MCF 10A (cell line): ENCODE measurements at regions of chr12 and their contacts with region 1.

Region 1: DNA sequence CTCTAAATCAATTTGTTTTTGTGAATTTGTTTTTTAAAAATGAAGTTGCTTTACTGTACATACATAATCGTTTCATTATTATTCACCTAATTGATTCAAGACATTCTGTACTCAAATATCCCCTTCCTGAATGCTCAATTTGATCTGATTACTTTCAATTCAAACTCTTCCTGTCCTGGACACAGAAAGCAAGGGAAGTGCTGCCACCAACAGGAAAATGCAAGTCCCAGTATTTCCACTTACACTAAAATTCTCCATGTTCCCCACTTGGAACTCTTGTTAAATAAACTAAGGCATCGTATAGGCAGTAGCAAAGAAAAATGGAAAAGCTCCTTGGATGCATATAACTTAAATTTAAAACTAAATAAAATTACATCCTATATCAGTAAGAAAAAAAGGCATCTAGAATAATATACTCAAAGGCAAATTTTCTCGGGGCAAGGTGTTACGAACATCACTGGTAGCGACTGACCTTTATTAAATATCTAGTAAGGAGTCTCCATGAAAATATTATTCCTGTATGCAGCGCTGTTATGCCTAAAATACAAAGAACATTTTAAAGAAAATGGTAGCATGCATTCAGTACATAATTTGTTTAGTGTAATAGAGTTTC is 72.0 kb upstream of the DBX2 start:
- DNase-seq: peak; percentile 50
- H3K4me3 Mint-ChIP-seq: no peak overlapping the region
- H3K27ac Mint-ChIP-seq: no peak overlapping the region
- H3K4me1 Mint-ChIP-seq: no peaks in the 10 kb centered on the region
- H3K27me3 Mint-ChIP-seq: peaks cover 38% of the 10 kb centered on the region
- CTCF ChIP-seq: peak; percentile 49

Region 2: GRCh38 chr12:44972746-44973421 is 150.0 kb before region 1 on chr12:
- CTCF ChIA-PET with region 1: interaction called, 7 read pairs
- POLR2A ChIA-PET with region 1: no interaction called
- intact Hi-C with region 1: loop called (anchors 1 kb)
- DNase-seq: peak; percentile 39
- H3K4me3 Mint-ChIP-seq: no peak overlapping the region
- H3K27ac Mint-ChIP-seq: no peak overlapping the region
- H3K4me1 Mint-ChIP-seq: no peaks in the 10 kb centered on the region
- H3K27me3 Mint-ChIP-seq: peaks cover 80% of the 10 kb centered on the region
- CTCF ChIP-seq: peak; percentile 29

Region 3: GRCh38 chr12:45098766-45099165 is 24.1 kb before region 1 on chr12:
- CTCF ChIA-PET with region 1: no interaction called
- POLR2A ChIA-PET with region 1: no interaction called
- intact Hi-C with region 1: no loop called
- DNase-seq: no peak
- H3K4me3 Mint-ChIP-seq: no peak overlapping the region
- H3K27ac Mint-ChIP-seq: no peak overlapping the region
- H3K4me1 Mint-ChIP-seq: no peaks in the 10 kb centered on the region
- H3K27me3 Mint-ChIP-seq: peaks cover 65% of the 10 kb centered on the region
- CTCF ChIP-seq: no peak

Region 4: DNA sequence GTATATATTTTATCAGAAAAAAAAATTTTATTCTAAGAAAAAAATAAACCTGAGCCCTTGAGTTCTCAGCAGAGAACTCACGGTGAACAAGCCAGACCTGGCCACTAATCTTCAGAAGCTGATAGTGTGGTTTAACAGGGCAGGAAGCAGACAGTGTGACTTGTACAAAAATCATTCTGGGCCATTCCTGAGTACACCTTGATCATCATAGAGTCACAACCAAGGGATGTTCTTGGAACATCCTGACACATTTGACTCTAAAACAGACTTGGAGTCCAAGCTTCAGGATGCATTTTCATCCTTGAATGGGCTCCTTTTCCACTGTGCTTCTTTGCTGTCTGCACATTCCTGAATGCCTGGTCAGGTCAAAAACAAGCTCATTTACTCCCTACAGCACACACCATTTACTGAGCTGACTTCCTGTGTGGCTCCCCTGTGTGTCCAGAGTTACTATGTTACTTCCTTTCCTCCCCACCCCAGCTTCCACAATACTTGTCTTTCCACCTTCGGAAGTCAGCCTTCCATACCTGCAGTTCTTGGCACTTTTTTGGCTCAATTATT is 205.0 kb after region 1 on chr12:
- CTCF ChIA-PET with region 1: no interaction called
- POLR2A ChIA-PET with region 1: no interaction called
- intact Hi-C with region 1: no loop called
- DNase-seq: no peak
- H3K4me3 Mint-ChIP-seq: no peak overlapping the region
- H3K27ac Mint-ChIP-seq: no peak overlapping the region
- H3K4me1 Mint-ChIP-seq: peaks cover 6% of the 10 kb centered on the region
- H3K27me3 Mint-ChIP-seq: no peaks in the 10 kb centered on the region
- CTCF ChIP-seq: no peak